Heart right ventricle (tissue), 16 donors: ENCODE measurements at regions of chr18 and their contacts with region 1.

Region 1: GRCh38 chr18:7177116-7177744 is 53.7 kb upstream of the LRRC30 start:
- DNase-seq: peak in 1 of 2 donors; percentile 18
- ATAC-seq: peak; percentile 75 to 94 (median 81)
- H3K4me3 ChIP-seq: no peak overlapping the region
- H3K27ac ChIP-seq: no peak overlapping the region
- H3K4me1 ChIP-seq: no peaks in the 10 kb centered on the region
- H3K27me3 ChIP-seq: peaks cover 0 to 15% (median 0%) of the 10 kb centered on the region in 7 donors
- CTCF ChIP-seq: peak in 8 of 9 donors; percentile 40 to 75 (median 64)

Region 2: DNA sequence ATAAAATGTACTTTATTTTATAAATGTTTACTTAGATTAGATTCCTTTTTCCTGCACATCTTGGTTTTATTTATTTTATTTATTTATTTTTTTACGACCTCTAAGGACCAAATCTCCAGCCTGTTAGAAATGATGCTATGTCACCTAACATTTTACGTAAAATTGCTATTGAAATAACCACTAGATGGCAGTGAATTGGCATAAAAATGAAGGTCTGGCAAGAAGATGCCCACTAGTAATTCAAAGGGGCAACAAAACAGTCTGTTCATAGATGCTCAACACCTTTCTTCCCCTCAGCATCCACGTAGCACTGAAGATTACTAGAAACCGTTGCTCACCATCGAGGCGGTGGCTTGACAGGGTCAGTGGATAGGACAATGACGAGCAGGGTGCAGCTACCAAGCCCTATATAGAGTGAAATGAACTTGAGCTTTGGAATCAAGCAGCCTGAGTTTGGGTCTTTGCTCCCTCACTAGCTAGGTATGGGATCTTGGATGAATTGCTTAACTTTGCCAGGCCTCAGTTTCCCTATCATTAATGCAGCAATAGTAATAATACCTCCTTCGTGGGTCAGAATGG is 633.8 kb before region 1 on chr18:
- intact Hi-C with region 1: loop called in 1 of 10 experiments (anchors 10 kb)
- DNase-seq: no peak
- ATAC-seq: peak in 1 of 8 donors; percentile 14
- H3K4me3 ChIP-seq: no peak overlapping the region
- H3K27ac ChIP-seq: no peak overlapping the region
- H3K4me1 ChIP-seq: peaks cover 0 to 10% (median 0%) of the 10 kb centered on the region in 9 donors
- H3K27me3 ChIP-seq: no peaks in the 10 kb centered on the region
- CTCF ChIP-seq: peak; percentile 52 to 77 (median 64)

Region 3: DNA sequence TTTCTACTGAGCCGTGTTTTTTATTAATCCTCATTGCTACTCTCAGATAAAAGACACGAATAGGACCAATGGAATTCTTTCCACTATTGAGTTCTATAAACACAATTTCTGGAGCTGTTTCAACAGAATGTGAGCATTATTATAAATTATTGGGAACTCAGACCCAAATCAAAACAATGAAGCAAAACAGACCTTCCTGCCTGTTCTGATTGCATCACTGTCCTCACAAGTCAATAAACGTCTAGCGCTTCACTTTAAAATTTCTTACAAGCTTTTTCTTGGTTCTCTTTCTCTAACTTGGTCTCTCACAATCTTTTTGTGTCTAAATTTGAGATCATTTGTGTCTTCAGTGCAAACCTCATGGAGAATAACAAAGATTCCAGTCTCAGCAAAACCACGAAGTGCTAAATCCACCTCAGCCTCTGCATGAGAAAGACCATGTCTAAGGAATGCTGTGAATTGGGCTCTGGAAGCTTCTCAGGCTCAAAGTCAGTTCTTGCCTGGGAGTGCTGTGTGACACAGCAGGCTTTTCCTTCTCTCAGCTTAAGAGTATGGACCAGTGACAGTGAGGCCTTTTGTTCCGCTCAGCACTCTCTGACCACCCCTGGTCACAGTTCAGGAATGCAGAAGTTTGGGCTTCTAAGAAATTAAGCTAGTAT is 424.9 kb before region 1 on chr18:
- intact Hi-C with region 1: no loop called
- DNase-seq: no peak
- ATAC-seq: peak in 3 of 8 donors; percentile 23 to 51 (median 38)
- H3K4me3 ChIP-seq: no peak overlapping the region
- H3K27ac ChIP-seq: peak overlapping the region in 4 of 10 donors; percentile 11 to 38 (median 22)
- H3K4me1 ChIP-seq: peaks cover 0 to 25% (median 19%) of the 10 kb centered on the region in 9 donors
- H3K27me3 ChIP-seq: no peaks in the 10 kb centered on the region
- CTCF ChIP-seq: no peak

Region 4: DNA sequence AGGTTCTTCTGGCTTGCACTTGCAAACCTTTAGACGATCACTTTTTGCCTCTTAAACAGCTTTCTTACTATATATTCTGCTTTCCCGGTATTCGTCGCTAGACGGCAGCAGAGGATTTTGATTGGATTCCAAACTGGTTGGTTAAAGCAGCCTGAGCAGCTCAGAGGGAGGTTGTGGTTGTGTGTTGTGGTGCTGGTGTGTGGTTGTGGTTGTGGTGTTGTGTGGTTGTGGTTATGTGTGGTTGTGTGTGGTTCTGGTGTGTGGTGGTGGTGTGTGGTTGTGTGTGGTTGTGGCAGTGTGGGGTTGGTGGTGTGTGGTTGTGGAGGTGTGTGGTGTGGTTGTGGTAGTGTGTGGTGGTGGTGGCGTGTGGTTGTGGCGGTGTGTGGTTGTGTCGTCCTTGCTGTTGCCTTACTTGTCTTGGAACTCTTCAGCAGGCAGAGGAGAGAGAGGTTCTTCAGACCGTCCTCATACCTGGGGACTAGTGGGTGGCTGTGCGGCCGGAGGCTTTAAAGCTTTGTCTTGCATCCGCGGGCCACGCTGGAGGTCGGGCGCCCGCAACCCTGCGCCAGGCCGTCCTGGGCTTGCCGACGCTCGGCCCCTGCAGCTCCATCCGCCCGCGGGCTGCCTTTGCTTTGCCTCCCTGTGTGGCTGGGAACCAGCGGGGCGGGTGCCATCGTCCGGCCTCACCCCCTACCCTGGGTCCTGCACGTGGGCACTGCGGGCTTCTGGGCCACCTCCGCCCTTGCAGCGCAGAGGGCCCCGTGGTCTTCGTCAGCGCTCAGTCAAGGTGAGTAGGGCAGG is 256.9 kb before region 1 on chr18:
- intact Hi-C with region 1: loop called (anchors 5 to 10 kb)
- DNase-seq: peak in 1 of 2 donors; percentile 12
- ATAC-seq: peak in 3 of 8 donors; percentile 24 to 47 (median 39)
- H3K4me3 ChIP-seq: no peak overlapping the region
- H3K27ac ChIP-seq: no peak overlapping the region
- H3K4me1 ChIP-seq: no peaks in the 10 kb centered on the region
- H3K27me3 ChIP-seq: peaks cover 0 to 19% (median 0%) of the 10 kb centered on the region in 7 donors
- CTCF ChIP-seq: peak; percentile 24 to 65 (median 59)